ENCODE measurements at regions of chr12 and their contacts with region 1.

Region 1: DNA sequence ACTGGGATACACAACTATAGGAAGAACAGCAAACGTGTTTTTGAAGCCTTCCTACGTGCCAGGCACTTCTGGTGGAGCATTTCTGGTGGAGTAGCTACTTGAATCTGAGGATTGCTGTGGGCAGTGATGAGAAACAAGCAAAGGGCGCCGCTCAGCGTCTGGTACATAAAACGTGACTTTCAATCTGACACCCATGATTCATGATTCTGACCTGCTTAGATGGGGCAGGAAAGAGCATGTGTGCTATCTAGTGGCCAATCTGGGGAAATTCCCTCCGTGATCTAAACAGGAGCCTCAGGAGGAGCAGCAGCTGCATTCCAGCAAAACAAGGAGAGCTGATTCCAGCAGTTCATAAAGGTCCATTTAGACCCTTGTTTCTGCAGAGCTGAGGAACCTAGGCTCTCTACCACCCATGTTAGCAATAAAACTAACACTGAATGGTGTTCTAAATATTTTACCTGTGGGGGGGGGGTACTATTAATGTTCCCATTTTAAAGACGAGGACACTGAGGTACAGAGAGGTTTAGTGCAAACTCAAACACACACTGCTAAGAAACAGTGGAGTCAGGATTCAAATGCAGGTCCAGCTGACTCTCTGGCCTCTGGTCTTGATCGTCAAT is 37.8 kb downstream of the PAH start:
- DNase-seq: peak; percentile 51
- ATAC-seq: peak; percentile 91
- H3K4me3 Mint-ChIP-seq: no peak overlapping the region; the same call in 1 of the 2 replicates
- H3K27ac Mint-ChIP-seq: no peak overlapping the region
- H3K4me1 Mint-ChIP-seq: peaks cover 3% of the 10 kb centered on the region; the same call in 1 of the 2 replicates
- H3K27me3 Mint-ChIP-seq: no peaks in the 10 kb centered on the region
- CTCF ChIP-seq: peak; percentile 45

Region 2: DNA sequence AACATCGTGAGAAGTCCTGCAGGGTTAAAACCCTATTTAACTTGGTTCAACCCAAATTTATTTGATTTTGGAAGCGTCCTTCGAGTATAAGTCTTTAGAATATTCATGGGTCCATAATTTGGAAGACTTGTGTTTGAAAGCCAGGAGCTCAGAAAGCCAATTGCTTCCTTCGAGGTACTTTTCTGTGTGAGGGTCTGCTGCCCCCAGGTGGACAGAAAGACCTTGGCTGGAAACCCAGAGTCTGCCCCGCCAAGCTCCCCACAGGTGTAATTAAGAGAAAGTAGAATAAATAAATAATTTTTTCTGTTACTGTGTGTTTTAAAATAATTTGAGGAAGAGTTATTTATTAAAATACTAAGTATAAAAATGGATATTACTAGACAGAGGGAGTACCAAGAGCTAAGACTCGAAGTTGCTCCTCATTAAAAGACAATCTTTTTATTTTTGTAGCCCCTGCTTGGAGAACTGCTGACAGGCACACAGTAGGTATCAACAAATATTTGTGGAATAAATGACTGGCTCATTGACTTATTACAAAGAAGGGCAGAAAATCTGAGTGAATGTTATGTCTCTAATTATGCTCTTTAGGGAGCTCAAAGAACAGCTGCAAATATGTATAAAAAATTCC is 68.0 kb before region 1 on chr12:
- CTCF ChIA-PET with region 1: interaction called, 30 read pairs
- POLR2A ChIA-PET with region 1: no interaction called
- DNase-seq: peak; percentile 71
- ATAC-seq: peak; percentile 83
- H3K4me3 Mint-ChIP-seq: no peak overlapping the region
- H3K27ac Mint-ChIP-seq: no peak overlapping the region
- H3K4me1 Mint-ChIP-seq: peaks cover 6% of the 10 kb centered on the region
- H3K27me3 Mint-ChIP-seq: no peaks in the 10 kb centered on the region; the same call in 1 of the 2 replicates
- CTCF ChIP-seq: peak; percentile 72

Region 3: DNA sequence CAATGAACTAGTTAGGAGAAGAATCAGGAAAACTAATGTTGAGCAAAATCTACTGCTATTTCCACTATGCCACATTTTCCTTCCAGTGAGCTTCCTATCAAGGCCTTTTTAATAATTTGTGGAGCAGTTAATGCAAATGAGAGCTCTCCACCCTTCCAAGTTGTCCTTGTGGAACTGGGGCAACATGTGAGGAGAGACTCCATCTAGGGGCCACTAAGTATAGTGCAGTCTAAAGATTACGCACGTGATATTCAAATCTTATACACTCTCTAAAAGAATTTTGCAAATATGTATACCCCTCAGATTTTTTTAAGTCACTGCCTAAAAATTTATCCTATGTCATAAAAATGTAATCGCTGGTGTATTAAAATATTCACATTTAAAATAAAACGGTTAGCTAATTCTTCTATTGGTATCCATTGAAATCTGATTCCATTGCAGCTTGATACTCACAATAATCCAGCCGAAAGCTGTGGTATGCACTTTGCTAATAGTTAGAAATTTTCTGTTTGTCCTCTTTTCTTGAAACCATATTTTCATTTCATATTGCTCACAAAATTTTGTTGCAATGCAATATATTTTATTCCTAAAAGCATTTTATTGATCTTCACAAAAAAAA is 62.3 kb before region 1 on chr12:
- CTCF ChIA-PET with region 1: interaction called, 17 read pairs
- POLR2A ChIA-PET with region 1: no interaction called
- DNase-seq: no peak
- ATAC-seq: peak; percentile 90
- H3K4me3 Mint-ChIP-seq: no peak overlapping the region
- H3K27ac Mint-ChIP-seq: no peak overlapping the region
- H3K4me1 Mint-ChIP-seq: peaks cover 6% of the 10 kb centered on the region
- H3K27me3 Mint-ChIP-seq: peaks cover 7% of the 10 kb centered on the region
- CTCF ChIP-seq: peak; percentile 82

Region 4: DNA sequence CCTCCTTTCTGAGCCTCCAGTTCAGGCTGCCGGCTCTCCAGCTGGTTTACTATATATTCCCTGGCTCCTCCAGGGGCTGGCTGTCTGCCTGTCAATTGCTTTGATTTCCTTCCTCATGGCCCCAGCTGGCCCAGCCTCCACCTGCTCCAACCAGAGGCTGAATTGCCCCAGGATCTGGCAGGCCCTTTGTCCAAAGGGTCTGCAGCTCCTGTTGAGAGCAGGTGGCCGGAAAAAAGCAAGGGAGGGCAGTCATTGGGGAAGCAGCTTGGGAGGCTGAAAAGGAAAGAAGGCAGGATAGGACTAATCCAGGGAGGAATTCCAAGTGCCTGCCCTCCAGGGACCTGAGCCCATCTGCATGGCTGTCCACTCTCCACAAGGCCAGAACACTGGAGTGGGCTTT is 12.5 kb after region 1 on chr12:
- CTCF ChIA-PET with region 1: interaction called, 14 read pairs
- POLR2A ChIA-PET with region 1: interaction called, 7 read pairs
- DNase-seq: no peak
- ATAC-seq: no peak
- H3K4me3 Mint-ChIP-seq: no peak overlapping the region
- H3K27ac Mint-ChIP-seq: no peak overlapping the region
- H3K4me1 Mint-ChIP-seq: peaks cover 9% of the 10 kb centered on the region
- H3K27me3 Mint-ChIP-seq: no peaks in the 10 kb centered on the region
- CTCF ChIP-seq: no peak

Region 5: GRCh38 chr12:102917026-102917787 is 38.0 kb after region 1 on chr12 and contains the start of gene PAH:
- CTCF ChIA-PET with region 1: interaction called, 13 read pairs
- POLR2A ChIA-PET with region 1: no interaction called
- DNase-seq: peak; percentile 82
- ATAC-seq: peak; percentile 96
- H3K4me3 Mint-ChIP-seq: peak within 1 kb of the TSS; percentile 68
- H3K27ac Mint-ChIP-seq: peak within 1 kb of the TSS; percentile 87
- H3K4me1 Mint-ChIP-seq: peaks cover 26% of the 10 kb centered on the region
- H3K27me3 Mint-ChIP-seq: no peaks in the 10 kb centered on the region; the same call in 1 of the 2 replicates
- CTCF ChIP-seq: no peak
- total RNA-seq, gene PAH: 4.0 to 9.8 TPM (median 5.7 TPM) in 3 replicates

Region 6: GRCh38 chr12:102939670-102940222 is 60.5 kb after region 1 on chr12:
- CTCF ChIA-PET with region 1: interaction called, 54 read pairs
- POLR2A ChIA-PET with region 1: no interaction called
- DNase-seq: no peak
- ATAC-seq: peak; percentile 82
- H3K4me3 Mint-ChIP-seq: no peak overlapping the region
- H3K27ac Mint-ChIP-seq: no peak overlapping the region
- H3K4me1 Mint-ChIP-seq: peaks cover 21% of the 10 kb centered on the region
- H3K27me3 Mint-ChIP-seq: peaks cover 7% of the 10 kb centered on the region
- CTCF ChIP-seq: no peak

Region 7: DNA sequence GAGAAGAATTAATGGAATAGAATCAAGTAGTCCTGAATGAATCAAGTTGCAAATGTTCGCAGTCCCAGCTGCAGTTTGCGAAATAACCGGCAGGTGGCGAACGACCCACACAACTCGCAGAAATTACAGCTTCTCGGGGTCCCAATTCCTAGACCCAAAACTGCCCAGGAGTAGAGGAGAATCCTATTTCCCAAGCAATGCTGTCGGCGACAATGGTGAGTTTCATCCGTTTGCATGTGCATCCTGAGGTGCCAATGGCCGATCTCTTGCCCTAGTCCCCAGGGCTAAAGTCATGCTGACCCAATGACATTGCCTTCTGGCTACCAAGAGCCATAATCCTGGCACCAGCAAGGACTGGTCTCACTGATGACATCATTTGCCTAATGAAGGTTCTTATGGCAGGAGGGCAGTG is 69.7 kb after region 1 on chr12:
- CTCF ChIA-PET with region 1: interaction called, 22 read pairs
- POLR2A ChIA-PET with region 1: no interaction called
- DNase-seq: peak; percentile 81
- ATAC-seq: peak; percentile 30
- H3K4me3 Mint-ChIP-seq: no peak overlapping the region
- H3K27ac Mint-ChIP-seq: no peak overlapping the region
- H3K4me1 Mint-ChIP-seq: peaks cover 21% of the 10 kb centered on the region
- H3K27me3 Mint-ChIP-seq: peaks cover 76% of the 10 kb centered on the region
- CTCF ChIP-seq: peak; percentile 96